Activated T-helper 2 cell treated with anti-CD3 and anti-CD28 coated beads, Interferon-gamma antibody, Interleukin-2, Interleukin-4, amounts not matched to agents 10 μg/mL and 5 μg/mL and 100 μg/mL, durations not matched to agents 14 hours and 24 hours and 36 hours (primary cell): ENCODE measurements at regions of chr11 and their contacts with region 1.

Region 1: GRCh38 chr11:78416305-78417178 is 1.1 kb downstream of the GAB2 start:
- DNase-seq: peak; percentile 82
- H3K4me3 Mint-ChIP-seq: peak overlapping the region; percentile 95
- H3K27ac Mint-ChIP-seq: peak overlapping the region; percentile 96
- H3K4me1 Mint-ChIP-seq: peaks cover 62% of the 10 kb centered on the region
- H3K27me3 Mint-ChIP-seq: no peaks in the 10 kb centered on the region

Region 2: DNA sequence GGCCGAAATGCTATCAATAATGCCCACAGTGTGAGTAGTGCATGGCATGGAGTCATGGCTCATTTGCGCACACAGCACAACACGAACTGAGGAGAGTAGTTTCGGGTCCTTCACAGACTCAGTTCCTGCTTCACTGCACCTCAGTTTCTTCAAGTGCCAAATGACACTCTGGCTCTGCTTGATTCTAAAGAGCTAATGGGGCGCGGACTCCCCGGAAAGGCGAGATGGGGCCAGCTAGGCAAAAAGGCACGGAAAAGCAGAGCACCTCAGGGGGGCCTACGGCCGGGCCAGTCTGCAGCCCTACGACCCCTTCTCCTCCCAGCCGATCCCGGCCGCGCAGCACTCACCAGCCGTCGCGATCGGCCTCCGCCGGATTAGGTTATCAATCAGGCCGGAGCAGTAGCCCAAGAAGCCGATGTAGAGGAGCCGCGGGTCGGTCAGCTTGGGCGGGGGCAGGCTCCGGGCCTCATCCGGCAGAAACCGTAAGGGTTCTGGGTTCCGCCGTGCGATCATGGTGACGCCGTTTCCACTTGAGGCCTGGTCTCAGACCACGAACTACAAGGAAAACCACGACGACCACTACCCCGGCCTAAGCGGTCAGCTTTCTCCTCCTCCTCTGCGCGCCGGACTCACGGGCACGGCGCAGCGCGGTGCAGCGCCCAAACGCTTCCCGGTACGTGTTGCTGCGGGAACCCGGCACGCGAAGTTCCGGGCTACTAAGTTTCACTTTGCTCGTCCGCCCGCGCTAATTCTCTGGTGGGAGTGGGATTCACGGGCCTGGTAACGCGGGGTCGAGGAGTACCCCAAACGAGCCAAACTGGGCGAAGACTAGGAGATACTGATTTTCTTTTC is 337.1 kb before region 1 on chr11 and contains the start of gene NDUFC2:
- intact Hi-C with region 1: loop called (anchors 10 kb)
- DNase-seq: peak; percentile 64
- H3K4me3 Mint-ChIP-seq: peak within 1 kb of the TSS; percentile 90
- H3K27ac Mint-ChIP-seq: peak within 1 kb of the TSS; percentile 82
- H3K4me1 Mint-ChIP-seq: peaks cover 44% of the 10 kb centered on the region
- H3K27me3 Mint-ChIP-seq: no peaks in the 10 kb centered on the region
- total RNA-seq, gene NDUFC2: 208 and 215 TPM in 2 replicates

Region 3: DNA sequence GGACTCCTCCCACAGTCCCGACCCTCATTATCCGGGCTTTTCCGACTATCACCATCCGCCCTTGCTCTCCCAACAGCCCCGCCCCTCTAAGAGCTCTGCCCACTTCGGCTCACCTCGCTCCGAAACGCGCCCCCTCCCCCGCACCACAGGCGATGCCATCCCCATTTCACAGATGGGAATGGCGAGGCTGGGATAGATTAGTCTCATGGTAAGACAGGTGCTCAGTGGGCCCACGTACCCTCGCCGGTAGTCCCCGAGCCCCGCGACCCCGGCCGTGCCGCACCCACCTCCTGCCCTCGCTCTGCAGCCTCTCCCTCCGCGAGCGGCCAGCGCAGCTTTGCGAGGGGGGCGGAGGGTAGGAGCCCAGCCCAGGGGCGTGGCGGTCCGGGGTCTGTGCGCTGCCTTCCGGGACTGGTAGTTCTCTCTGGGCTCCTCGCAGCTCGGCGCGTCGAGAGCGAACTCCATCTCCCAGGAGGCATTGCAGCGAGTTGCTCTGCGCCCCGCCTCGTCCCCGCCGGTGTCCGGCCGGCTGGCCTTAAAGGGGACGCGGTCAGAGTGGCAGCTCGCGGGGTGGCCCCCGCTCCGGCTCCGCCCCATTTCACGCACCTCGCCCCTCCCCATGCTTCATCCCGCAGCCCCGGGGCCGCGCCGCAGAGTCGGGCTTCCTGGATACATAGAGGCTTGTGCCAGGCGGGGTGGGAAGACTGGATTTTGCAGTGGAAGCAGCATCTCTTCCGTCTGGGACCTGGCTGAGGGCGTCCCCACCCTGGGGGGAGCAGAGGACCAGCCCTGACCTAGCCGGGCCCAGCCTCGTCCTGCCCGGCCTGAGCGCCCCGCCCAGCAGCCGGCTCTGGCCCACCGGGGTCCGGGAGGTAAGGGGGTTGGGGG is 228.0 kb before region 1 on chr11 and contains the starts of genes KCTD21 and USP35:
- intact Hi-C with region 1: loop called (anchors 1 kb)
- DNase-seq: peak; percentile 93
- H3K4me3 Mint-ChIP-seq: peak within 1 kb of the TSS; percentile 97
- H3K27ac Mint-ChIP-seq: peak within 1 kb of the TSS; percentile 99
- H3K4me1 Mint-ChIP-seq: peaks cover 49% of the 10 kb centered on the region
- H3K27me3 Mint-ChIP-seq: no peaks in the 10 kb centered on the region
- total RNA-seq, gene KCTD21: 10.0 and 10.4 TPM in 2 replicates
- total RNA-seq, gene USP35: 12.9 and 14.6 TPM in 2 replicates

Region 4: GRCh38 chr11:78325274-78325781 is 91.2 kb before region 1 on chr11:
- intact Hi-C with region 1: loop called (anchors 10 kb)
- DNase-seq: peak; percentile 41
- H3K4me3 Mint-ChIP-seq: peak overlapping the region; percentile 10
- H3K27ac Mint-ChIP-seq: peak overlapping the region; percentile 85
- H3K4me1 Mint-ChIP-seq: peaks cover 93% of the 10 kb centered on the region
- H3K27me3 Mint-ChIP-seq: no peaks in the 10 kb centered on the region

Region 5: GRCh38 chr11:78429660-78430059 is 13.1 kb after region 1 on chr11:
- intact Hi-C with region 1: loop called (anchors 1 kb)
- DNase-seq: no peak
- H3K4me3 Mint-ChIP-seq: peak overlapping the region; percentile 32
- H3K27ac Mint-ChIP-seq: peak overlapping the region; percentile 79
- H3K4me1 Mint-ChIP-seq: peaks cover 64% of the 10 kb centered on the region
- H3K27me3 Mint-ChIP-seq: no peaks in the 10 kb centered on the region

Region 6: GRCh38 chr11:78564490-78565467 is 148.2 kb after region 1 on chr11:
- intact Hi-C with region 1: loop called (anchors 1 kb)
- DNase-seq: peak; percentile 26
- H3K4me3 Mint-ChIP-seq: no peak overlapping the region
- H3K27ac Mint-ChIP-seq: peak overlapping the region; percentile 76
- H3K4me1 Mint-ChIP-seq: peaks cover 53% of the 10 kb centered on the region
- H3K27me3 Mint-ChIP-seq: no peaks in the 10 kb centered on the region